WTC11 (cell line): ENCODE measurements at regions of chr14 and their contacts with region 1.

Region 1: GRCh38 chr14:71166180-71166790 is 259.0 kb downstream of the PCNX1 start:
- DNase-seq: peak; percentile 39
- ATAC-seq: peak; percentile 85
- H3K4me3 Mint-ChIP-seq: no peak overlapping the region
- H3K27ac Mint-ChIP-seq: no peak overlapping the region
- H3K4me1 Mint-ChIP-seq: peaks cover 3% of the 10 kb centered on the region
- H3K27me3 Mint-ChIP-seq: no peaks in the 10 kb centered on the region; the same call in 1 of the 2 replicates
- CTCF ChIP-seq: no peak

Region 2: DNA sequence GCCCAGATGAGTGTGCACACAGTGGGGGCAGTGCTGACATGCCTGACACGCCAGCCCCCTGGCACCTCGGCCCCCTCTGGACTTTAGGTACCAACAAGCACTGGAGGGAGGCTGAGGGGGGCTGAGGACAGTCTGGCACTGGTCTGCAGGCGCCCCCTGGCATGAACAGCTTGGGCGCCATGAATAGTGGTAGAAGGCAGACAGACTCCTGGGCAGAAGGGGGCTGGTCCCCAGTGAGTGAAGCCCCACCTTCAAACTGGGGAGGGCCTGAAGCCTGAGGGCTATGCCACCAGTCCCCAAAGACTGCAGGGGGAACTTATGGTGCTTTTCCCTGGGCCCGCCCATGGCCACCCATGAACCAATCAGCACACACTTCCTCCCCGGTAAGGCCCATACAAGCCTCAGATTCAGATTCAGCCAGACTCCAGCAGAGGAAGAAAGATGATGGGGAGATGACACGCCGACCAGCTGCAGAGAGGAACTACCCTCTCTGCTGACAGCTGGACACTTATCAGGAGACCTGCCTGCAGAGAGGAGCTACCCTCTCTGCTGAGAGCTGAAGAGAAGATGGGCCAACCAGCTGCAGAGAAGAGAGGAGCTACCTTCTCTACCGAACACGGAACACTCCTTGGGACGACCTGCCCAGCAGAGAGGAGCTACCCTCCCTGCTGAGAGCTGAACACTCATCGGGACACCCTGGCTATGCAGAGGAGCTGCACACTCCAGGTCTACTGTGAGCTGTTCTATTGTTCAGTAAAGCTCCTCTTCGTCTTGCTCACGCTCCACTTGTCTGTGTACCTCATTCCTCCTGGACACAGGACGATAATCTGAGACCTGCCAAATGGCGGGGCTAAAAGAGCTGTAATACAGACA is 65.5 kb after region 1 on chr14:
- CTCF ChIA-PET with region 1: interaction called, 14 read pairs
- POLR2A ChIA-PET with region 1: no interaction called
- DNase-seq: peak; percentile 19
- ATAC-seq: peak; percentile 80
- H3K4me3 Mint-ChIP-seq: no peak overlapping the region; the same call in 1 of the 2 replicates
- H3K27ac Mint-ChIP-seq: peak overlapping the region; percentile 33; the same call in 1 of the 2 replicates
- H3K4me1 Mint-ChIP-seq: peaks cover 4% of the 10 kb centered on the region; the same call in 1 of the 2 replicates
- H3K27me3 Mint-ChIP-seq: no peaks in the 10 kb centered on the region; the same call in 1 of the 2 replicates
- CTCF ChIP-seq: no peak

Region 3: GRCh38 chr14:71309753-71310152 is 143.5 kb after region 1 on chr14:
- CTCF ChIA-PET with region 1: interaction called, 28 read pairs
- POLR2A ChIA-PET with region 1: no interaction called
- DNase-seq: no peak
- ATAC-seq: peak; percentile 93
- H3K4me3 Mint-ChIP-seq: no peak overlapping the region
- H3K27ac Mint-ChIP-seq: no peak overlapping the region
- H3K4me1 Mint-ChIP-seq: peaks cover 2% of the 10 kb centered on the region
- H3K27me3 Mint-ChIP-seq: peaks cover 4% of the 10 kb centered on the region; the same call in 1 of the 2 replicates
- CTCF ChIP-seq: no peak

Region 4: GRCh38 chr14:71320734-71321573 is 154.7 kb after region 1 on chr14:
- CTCF ChIA-PET with region 1: interaction called, 11 read pairs
- POLR2A ChIA-PET with region 1: no interaction called
- DNase-seq: peak; percentile 51
- ATAC-seq: peak; percentile 3
- H3K4me3 Mint-ChIP-seq: peak overlapping the region; percentile 92
- H3K27ac Mint-ChIP-seq: peak overlapping the region; percentile 97
- H3K4me1 Mint-ChIP-seq: peaks cover 43% of the 10 kb centered on the region
- H3K27me3 Mint-ChIP-seq: no peaks in the 10 kb centered on the region
- CTCF ChIP-seq: no peak

Region 5: GRCh38 chr14:71586131-71586897 is 420.0 kb after region 1 on chr14:
- CTCF ChIA-PET with region 1: no interaction called
- POLR2A ChIA-PET with region 1: no interaction called
- DNase-seq: no peak
- ATAC-seq: peak; percentile 70
- H3K4me3 Mint-ChIP-seq: peak overlapping the region; percentile 37
- H3K27ac Mint-ChIP-seq: no peak overlapping the region; the same call in 1 of the 2 replicates
- H3K4me1 Mint-ChIP-seq: peaks cover 44% of the 10 kb centered on the region
- H3K27me3 Mint-ChIP-seq: no peaks in the 10 kb centered on the region
- CTCF ChIP-seq: no peak